Activated CD4-positive, alpha-beta T cell treated with anti-CD3 and anti-CD28 coated beads, Interleukin-2, amount 10 ng/mL, durations not matched to agents 24 days and 14 days (primary cell): ENCODE measurements at regions of chr19 and their contacts with region 1.

Region 1: DNA sequence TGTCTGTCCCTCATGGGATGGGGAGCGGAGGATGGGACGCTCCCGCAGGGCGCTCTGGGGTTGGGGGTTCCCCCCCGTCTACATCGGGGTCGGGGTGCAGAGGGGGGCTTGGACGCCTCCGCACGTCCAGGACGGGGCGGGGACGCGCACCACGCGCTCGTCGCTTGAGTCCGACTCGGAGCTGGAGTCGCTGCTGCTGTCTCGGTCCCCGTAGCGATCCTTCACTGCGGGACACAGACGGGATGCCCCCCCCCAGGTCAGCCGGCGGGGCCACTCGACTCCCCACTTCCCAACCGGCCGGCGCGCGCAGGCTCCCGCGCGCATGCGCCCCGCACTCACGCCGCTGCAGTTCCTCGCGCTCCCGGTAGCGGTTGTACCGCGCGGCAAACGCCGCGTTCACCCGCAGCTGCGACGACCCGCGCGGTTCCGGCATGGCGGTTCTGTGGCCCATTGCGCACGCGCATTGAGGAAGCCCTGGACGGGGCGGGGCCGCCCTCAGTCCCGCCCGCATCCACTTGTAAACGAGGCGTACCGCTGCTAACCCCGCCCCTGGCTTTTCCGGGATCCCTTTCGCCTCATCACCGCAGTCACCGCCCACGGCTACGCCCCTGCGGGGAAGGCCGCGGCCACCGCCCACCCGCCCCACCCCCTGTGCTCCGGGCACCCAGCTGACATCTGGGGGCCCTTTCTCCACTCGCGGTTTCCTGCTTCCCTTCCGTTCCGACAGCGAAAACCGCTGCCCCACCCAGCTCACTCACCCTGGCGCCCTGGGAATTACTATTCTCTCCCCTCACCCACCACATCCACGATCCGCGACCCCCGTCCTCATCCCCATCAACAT is at the start of gene KRI1:
- DNase-seq: peak; percentile 100
- H3K4me3 Mint-ChIP-seq: peak within 1 kb of the TSS; percentile 99
- H3K27ac Mint-ChIP-seq: peak within 1 kb of the TSS; percentile 96
- H3K4me1 Mint-ChIP-seq: peaks cover 47% of the 10 kb centered on the region
- H3K27me3 Mint-ChIP-seq: peaks cover 3% of the 10 kb centered on the region
- total RNA-seq, gene KRI1: 84.0 and 90.6 TPM in 2 replicates

Region 2: DNA sequence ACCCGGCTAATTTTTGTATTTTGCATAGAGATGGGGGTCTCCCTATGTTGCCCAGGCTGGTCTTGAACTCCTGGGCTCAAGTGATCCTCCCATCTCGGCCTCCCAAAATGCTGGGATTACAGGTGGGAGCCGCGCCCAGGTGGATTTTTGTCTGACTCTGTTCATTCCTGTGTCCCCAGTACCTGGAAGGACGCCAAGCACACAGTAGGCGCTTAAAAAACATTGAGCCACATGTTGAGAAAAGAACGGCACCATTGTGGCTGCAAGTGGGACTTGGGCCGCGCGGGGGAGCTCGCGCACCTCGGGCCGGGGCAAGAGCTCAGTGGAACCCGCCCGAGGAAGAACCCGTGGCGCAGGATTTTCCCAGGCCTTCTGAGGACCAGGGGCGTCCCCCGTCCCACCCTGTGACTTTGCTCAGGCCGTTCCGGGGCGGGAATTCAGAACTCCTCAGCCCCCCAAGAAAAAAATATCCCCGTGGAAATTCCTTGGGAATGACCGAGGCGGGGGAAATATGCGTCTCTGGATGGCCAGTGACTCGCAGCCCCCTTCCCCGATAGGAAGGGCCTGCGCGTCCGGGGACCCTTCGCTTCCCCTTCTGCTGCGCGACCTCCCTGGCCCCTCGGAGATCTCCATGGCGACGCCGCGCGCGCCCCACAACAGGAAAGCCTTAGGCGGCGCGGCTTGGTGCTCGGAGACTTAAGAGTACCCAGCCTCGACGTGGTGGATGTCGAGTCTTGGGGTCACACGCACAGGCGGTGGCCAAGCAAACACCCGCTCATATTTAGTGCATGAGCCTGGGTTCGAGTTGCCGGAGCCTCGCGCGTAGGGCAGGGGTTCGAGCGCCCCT is 296.2 kb before region 1 on chr19:
- intact Hi-C with region 1: loop called (anchors 5 kb)
- DNase-seq: peak; percentile 97
- H3K4me3 Mint-ChIP-seq: peak overlapping the region; percentile 96
- H3K27ac Mint-ChIP-seq: peak overlapping the region; percentile 96
- H3K4me1 Mint-ChIP-seq: peaks cover 28% of the 10 kb centered on the region
- H3K27me3 Mint-ChIP-seq: no peaks in the 10 kb centered on the region

Region 3: GRCh38 chr19:10416380-10417257 is 149.2 kb before region 1 on chr19:
- intact Hi-C with region 1: loop called (anchors 5 kb)
- DNase-seq: peak; percentile 99
- H3K4me3 Mint-ChIP-seq: peak overlapping the region; percentile 86
- H3K27ac Mint-ChIP-seq: peak overlapping the region; percentile 96
- H3K4me1 Mint-ChIP-seq: peaks cover 53% of the 10 kb centered on the region
- H3K27me3 Mint-ChIP-seq: peaks cover 8% of the 10 kb centered on the region

Region 4: GRCh38 chr19:10551698-10552301 is 14.0 kb before region 1 on chr19:
- intact Hi-C with region 1: loop called (anchors 2 kb)
- DNase-seq: peak; percentile 80
- H3K4me3 Mint-ChIP-seq: no peak overlapping the region
- H3K27ac Mint-ChIP-seq: peak overlapping the region; percentile 67
- H3K4me1 Mint-ChIP-seq: peaks cover 45% of the 10 kb centered on the region
- H3K27me3 Mint-ChIP-seq: no peaks in the 10 kb centered on the region

Region 5: GRCh38 chr19:10797541-10798256 is 231.9 kb after region 1 on chr19:
- intact Hi-C with region 1: loop called (anchors 5 kb)
- DNase-seq: peak; percentile 96
- H3K4me3 Mint-ChIP-seq: peak overlapping the region; percentile 89
- H3K27ac Mint-ChIP-seq: peak overlapping the region; percentile 99
- H3K4me1 Mint-ChIP-seq: peaks cover 41% of the 10 kb centered on the region
- H3K27me3 Mint-ChIP-seq: no peaks in the 10 kb centered on the region